ENCODE measurements at regions of chr19 and their contacts with region 1.

Region 1: DNA sequence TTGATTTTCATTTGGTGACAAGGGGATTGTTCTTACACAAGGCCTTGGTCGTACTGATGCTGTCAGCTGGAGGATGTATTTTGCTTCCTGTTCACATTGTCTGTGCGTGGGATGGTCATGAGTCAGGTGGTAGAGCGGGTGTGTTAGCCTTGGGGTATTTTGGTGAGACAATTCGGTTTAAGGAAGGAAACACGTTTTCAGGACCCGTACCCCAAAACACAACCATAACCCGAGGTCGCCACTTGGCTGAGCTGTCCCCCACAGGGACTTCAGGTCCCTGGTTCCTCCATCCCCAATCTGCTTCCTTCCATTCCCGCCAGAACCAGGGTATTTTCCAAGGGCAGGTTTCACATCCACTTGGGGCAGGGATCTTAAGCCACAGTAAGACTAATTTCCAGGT is 15.0 kb downstream of the MYO9B start:
- DNase-seq: no peak
- ATAC-seq: peak; percentile 70
- H3K4me3 Mint-ChIP-seq: peak overlapping the region; percentile 29
- H3K27ac Mint-ChIP-seq: peak overlapping the region; percentile 85
- H3K4me1 Mint-ChIP-seq: peaks cover 59% of the 10 kb centered on the region
- H3K27me3 Mint-ChIP-seq: no peaks in the 10 kb centered on the region
- CTCF ChIP-seq: no peak

Region 2: DNA sequence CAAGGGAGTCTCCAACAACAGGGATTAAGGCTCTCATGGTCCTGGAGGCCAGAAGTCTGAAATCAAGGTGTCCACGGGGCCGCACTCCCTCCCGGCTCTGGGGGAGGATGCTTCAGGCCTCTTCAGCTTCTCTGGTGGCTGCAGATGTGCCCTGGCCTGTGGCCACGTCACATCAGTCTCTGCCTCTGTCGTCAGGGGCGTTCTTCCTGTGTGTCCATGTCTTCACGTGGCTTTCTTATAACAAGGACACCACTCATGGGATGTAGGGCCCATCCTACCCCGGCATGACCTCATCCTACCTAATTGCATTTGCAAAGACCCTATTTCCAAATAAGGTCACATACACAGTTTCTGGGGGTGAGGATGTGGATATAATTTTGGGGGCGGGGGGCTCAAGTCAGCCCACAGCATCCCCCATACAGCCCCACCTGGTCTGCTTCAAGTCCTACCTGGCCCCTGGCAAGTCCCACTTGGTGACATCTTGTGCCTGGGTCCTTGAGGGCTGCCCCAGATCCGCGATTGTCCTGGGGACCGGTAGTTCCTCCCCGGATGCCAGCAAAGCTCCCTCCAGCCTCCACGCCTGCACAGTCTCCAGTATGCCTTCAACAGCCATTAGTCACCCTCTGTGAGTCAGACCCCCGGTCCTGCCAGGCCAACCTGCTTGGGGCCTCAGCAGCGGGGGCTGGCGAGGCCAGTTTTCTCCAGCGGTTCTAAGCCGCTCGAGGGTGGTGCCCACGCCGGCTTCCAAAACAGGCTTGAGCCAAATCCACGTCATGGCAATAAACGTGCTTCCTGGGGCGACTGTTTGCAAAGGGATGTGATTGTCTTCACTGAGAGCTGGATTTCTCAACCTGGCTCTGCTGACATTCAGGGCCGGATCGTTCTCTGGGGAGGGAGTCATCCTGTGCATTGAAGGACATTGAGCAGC is 17.2 kb after region 1 on chr19:
- CTCF ChIA-PET with region 1: interaction called, 4 read pairs
- POLR2A ChIA-PET with region 1: interaction called, 7 read pairs
- intact Hi-C with region 1: loop called (anchors 2 kb)
- DNase-seq: no peak
- ATAC-seq: peak; percentile 23
- H3K4me3 Mint-ChIP-seq: peak overlapping the region; percentile 53
- H3K27ac Mint-ChIP-seq: peak overlapping the region; percentile 86
- H3K4me1 Mint-ChIP-seq: peaks cover 93% of the 10 kb centered on the region
- H3K27me3 Mint-ChIP-seq: no peaks in the 10 kb centered on the region
- CTCF ChIP-seq: no peak